ENCODE measurements at regions of chr11 and their contacts with region 1.

Region 1: DNA sequence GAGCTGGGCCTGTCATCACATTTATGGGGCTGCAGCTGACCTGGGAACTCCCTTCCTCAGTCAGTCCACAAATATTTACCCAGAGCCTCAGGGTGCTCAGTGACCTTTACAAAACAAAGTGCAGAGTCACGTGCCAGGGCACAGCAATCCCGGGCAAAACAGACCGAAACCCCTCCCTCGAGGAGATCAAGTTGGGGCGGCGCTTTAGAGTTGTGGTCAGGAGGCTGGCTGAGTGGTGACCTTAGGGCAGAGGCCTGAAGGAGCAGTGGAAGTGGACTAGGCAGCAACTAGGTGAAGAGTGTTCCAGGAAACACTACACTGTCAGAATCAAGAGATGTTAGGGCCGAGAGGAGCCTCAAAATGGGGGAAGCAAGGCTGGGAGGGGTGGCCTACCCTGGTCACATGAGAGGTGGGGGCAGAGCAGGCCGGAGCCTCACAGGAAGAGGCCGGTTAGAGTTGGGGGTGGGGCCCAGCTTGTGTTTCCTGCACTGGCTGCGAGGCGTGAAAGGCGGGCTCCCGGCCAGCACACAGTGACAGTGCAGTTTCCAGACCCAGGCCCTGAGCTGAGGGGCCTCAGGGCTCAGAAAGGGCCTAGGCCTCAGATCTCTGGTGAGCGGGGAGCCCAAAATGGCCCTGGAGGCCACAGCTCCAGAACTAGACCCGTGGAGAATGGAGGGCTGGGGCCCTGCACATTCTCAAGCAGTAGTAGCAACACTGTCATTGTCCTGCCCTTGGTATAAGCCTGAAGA is 3.7 kb upstream of the NEAT1 start:
- DNase-seq: peak; percentile 96 to 99
- H3K4me3 ChIP-seq: peak overlapping the region; percentile 14
- CTCF ChIP-seq: no peak
- POLR2A ChIP-seq: peak in 1 of 2 donors; percentile 22

Region 2: DNA sequence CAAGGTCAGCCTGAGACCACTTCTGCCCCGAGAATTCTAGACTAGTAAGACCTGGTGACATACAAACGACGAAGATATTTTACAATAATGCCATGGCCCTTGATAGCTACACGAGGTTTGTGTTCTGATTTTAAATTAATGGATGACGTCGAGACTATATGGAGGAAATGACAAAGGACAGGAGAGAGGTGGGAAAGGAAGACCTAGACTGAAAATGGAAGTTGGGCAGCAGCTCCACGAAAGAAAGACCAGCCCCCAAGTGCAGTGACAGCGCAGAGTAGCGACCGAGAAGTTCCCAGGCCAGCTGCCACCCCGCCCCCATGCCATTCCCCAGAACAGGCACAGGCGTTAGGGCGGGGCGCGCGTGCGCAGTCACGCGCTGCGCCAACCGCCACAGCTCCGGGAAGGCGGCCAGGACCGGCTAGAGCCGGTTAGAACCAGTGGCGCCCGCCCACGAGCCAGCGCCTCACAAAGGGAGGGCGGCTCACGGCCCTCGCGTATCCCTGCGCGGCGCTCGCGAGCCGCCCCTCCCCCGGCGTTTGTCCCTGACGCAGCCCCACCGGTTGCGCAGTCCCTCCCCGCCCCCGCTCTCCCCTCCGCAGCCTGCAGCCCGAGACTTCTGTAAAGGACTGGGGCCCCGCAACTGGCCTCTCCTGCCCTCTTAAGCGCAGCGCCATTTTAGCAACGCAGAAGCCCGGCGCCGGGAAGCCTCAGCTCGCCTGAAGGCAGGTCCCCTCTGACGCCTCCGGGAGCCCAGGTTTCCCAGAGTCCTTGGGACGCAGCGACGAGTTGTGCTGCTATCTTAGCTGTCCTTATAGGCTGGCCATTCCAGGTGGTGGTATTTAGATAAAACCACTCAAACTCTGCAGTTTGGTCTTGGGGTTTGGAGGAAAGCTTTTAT is 78.5 kb after region 1 on chr11:
- intact Hi-C with region 1: loop called (anchors 5 kb)
- DNase-seq: peak; percentile 97 to 100
- H3K4me3 ChIP-seq: peak overlapping the region; percentile 52
- CTCF ChIP-seq: no peak
- POLR2A ChIP-seq: peak in 1 of 2 donors; percentile 78

Region 3: GRCh38 chr11:65506770-65507505 is 88.1 kb after region 1 on chr11:
- intact Hi-C with region 1: loop called (anchors 5 kb)
- DNase-seq: no peak
- H3K4me3 ChIP-seq: no peak overlapping the region
- CTCF ChIP-seq: no peak
- POLR2A ChIP-seq: no peak

Region 4: DNA sequence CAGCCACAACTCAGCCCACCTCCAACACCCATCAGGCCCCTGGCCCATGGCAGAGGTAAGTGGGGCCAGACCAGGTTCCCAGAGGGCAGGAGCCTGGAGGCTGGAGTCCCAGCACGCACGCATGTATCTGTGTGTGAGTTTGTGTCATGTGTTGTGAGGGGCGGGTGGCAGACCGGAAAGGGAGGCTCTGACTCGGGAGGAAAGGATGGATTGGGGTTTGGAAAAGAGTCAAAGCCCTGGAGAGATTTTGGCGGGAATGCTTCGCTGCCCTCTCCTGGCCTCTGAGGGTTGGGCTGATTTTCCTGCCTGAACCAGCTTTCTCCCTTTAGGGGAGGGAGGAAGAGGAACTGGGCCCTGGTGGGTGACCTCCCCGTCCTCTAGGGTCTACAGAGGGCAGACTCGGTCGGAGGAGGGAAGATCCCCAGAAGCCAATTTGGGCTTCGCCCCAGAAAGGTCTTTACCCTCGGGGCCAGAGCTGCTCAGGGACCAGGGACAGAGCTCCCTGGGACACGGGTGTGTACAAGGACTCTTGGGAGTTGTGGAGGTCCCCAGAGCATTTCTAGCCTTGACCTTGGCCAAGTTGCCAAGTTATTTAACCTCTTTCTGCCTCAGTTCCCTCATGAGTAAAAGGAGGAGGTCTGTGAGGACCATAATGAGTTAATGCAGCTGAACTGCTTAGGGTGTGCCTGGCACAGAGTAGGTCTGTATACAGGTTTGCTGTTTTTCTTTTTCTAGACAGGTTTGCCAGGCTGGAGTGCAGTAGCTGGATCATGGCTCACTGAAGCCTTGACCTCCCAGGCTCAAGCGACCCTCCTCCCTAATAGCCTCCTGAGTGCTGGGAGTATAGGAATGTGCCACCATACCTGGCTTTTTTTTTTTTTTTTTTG is 493.0 kb after region 1 on chr11:
- intact Hi-C with region 1: no loop called
- DNase-seq: peak in 1 of 2 donors; percentile 95
- H3K4me3 ChIP-seq: no peak overlapping the region
- CTCF ChIP-seq: no peak
- POLR2A ChIP-seq: no peak

Region 5: GRCh38 chr11:66222358-66223149 is 803.7 kb after region 1 on chr11:
- intact Hi-C with region 1: no loop called
- DNase-seq: peak; percentile 90 to 97
- H3K4me3 ChIP-seq: no peak overlapping the region
- CTCF ChIP-seq: peak in 2 of 3 donors; percentile 35 to 99
- POLR2A ChIP-seq: no peak